Activated naive CD4-positive, alpha-beta T cell treated with anti-CD3 and anti-CD28 coated beads for 36 hours (primary cell): ENCODE measurements at regions of chr10 and their contacts with region 1.

Region 1: GRCh38 chr10:110304780-110305421 is at the start of gene SMNDC1:
- DNase-seq: peak; percentile 99
- H3K4me3 Mint-ChIP-seq: peak within 1 kb of the TSS; percentile 95
- H3K27ac Mint-ChIP-seq: peak within 1 kb of the TSS; percentile 97
- H3K4me1 Mint-ChIP-seq: peaks cover 51% of the 10 kb centered on the region
- H3K27me3 Mint-ChIP-seq: no peaks in the 10 kb centered on the region
- total RNA-seq, gene SMNDC1: 42.4 to 46.2 TPM

Region 2: GRCh38 chr10:110225756-110226542 is 79.0 kb before region 1 on chr10:
- CTCF ChIA-PET with region 1: no interaction called
- intact Hi-C with region 1: loop called (anchors 1 kb)
- DNase-seq: peak; percentile 93
- H3K4me3 Mint-ChIP-seq: peak overlapping the region; percentile 97
- H3K27ac Mint-ChIP-seq: peak overlapping the region; percentile 94
- H3K4me1 Mint-ChIP-seq: peaks cover 47% of the 10 kb centered on the region
- H3K27me3 Mint-ChIP-seq: no peaks in the 10 kb centered on the region

Region 3: DNA sequence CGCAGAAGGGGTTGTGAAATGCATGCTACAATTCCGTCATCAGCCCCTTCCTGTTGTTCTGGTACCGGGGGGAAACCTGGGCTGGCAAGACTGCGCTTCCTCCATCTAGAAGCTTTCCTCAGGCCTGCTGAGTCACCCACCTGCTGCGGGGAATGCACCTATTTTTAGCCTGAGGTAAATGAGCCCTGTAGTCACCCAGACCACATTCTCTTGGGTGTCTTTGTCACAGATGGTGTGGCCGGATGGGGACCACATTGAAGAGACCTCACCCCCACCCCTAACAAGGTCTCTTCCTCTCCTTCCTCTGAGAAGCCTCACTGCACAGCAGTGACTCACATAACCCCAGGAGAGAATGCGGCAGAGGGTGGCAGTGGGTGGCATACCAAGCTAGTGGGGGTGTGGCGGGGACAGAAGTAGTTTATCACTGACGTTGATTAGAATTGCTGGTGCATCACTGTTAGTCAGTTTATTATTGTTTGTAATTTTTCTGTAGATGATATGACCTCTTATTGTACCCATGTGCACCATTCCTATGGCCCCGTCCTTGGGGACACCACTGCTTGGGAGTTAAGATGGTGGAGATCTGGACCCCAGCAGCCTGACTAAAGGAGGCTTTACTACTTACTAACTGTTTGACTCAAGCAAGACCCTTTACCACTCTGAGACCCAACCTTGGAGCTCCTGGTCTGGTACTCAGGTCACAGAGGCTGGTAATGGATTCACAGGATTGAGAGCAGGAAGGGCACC is 109.8 kb after region 1 on chr10:
- CTCF ChIA-PET with region 1: no interaction called
- intact Hi-C with region 1: loop called (anchors 1 kb)
- DNase-seq: peak; percentile 98
- H3K4me3 Mint-ChIP-seq: peak overlapping the region; percentile 41
- H3K27ac Mint-ChIP-seq: peak overlapping the region; percentile 84
- H3K4me1 Mint-ChIP-seq: peaks cover 73% of the 10 kb centered on the region
- H3K27me3 Mint-ChIP-seq: no peaks in the 10 kb centered on the region

Region 4: DNA sequence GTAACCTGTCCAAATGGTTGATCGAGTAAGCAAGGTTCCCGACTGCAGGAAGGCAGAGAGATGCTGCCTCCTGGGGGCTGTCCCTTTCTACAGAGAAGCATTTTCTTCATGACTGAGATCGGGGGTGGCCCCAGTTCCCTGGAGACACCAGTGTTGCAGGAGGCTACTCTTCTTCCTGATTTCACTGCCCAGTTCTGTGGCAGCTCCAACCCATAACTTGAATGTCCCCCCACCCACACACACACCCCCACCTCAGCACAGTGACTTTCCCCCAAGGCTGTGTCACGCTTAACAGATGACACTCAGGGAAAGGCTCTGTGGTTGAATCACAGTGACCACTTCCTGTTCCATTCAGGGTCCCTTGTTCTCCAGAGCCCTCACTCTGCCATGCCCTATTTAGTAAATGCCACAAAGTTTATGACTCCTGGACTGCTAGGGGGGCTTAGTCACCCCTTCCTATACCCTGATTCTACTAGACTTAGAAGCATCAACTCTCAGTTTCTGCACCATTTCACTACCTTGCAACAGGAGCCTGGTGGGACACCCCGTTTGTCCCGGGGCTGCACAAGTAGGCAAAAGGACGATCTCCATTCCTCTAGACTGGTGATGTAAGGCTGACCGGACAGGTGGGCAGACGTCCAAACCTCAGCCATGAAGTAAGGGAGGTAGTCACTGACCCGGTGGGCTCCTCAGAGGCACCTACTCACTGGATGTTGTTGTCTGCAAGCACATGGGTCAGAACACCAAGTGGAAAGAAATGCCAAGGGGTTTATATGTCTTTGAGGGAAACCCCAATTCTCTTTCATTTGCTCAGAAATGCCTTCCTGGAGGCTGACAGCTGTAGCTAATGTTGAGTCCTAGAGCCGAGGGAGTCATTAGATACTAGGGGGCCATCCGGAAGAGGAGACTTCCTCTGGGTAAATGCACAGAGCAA is 231.3 kb after region 1 on chr10:
- CTCF ChIA-PET with region 1: interaction called, 5 read pairs
- intact Hi-C with region 1: loop called (anchors 1 kb)
- DNase-seq: peak; percentile 90
- H3K4me3 Mint-ChIP-seq: no peak overlapping the region
- H3K27ac Mint-ChIP-seq: peak overlapping the region; percentile 54
- H3K4me1 Mint-ChIP-seq: peaks cover 22% of the 10 kb centered on the region
- H3K27me3 Mint-ChIP-seq: no peaks in the 10 kb centered on the region

Region 5: GRCh38 chr10:110610308-110610774 is 305.4 kb after region 1 on chr10:
- CTCF ChIA-PET with region 1: interaction called, 4 read pairs
- intact Hi-C with region 1: loop called (anchors 1 kb)
- DNase-seq: peak; percentile 75
- H3K4me3 Mint-ChIP-seq: no peak overlapping the region
- H3K27ac Mint-ChIP-seq: no peak overlapping the region
- H3K4me1 Mint-ChIP-seq: peaks cover 26% of the 10 kb centered on the region
- H3K27me3 Mint-ChIP-seq: no peaks in the 10 kb centered on the region

Region 6: GRCh38 chr10:110893559-110894179 is 588.8 kb after region 1 on chr10:
- CTCF ChIA-PET with region 1: interaction called, 3 read pairs
- intact Hi-C with region 1: loop called (anchors 2 kb)
- DNase-seq: no peak
- H3K4me3 Mint-ChIP-seq: no peak overlapping the region
- H3K27ac Mint-ChIP-seq: no peak overlapping the region
- H3K4me1 Mint-ChIP-seq: peaks cover 42% of the 10 kb centered on the region
- H3K27me3 Mint-ChIP-seq: no peaks in the 10 kb centered on the region